Heart right ventricle (tissue), 16 donors: ENCODE measurements at regions of chr10 and their contacts with region 1.

Region 1: DNA sequence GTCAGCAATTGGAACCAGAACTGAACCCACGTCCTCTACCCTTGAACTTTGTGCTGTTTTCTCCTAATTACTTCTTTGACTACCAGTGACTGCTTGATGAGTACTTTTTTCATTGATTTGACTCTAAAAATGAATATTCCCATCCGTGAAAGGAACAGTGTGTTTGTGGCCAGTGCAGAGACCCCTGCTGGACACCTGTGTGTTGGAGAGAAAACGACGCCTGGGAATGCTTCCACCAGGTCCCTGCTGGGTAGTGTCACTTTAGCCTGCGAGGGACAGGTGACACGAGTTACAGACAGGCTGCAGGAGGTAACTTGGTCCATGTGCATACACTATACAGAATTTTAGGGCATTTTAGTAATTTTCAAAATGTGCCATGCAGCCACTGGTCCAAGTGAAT is 6.8 kb upstream of the GJD4 start:
- DNase-seq: no peak
- ATAC-seq: peak in 1 of 8 donors; percentile 39
- H3K4me3 ChIP-seq: no peak overlapping the region
- H3K27ac ChIP-seq: no peak overlapping the region
- H3K4me1 ChIP-seq: no peaks in the 10 kb centered on the region
- H3K27me3 ChIP-seq: peaks cover 0 to 21% (median 7%) of the 10 kb centered on the region in 7 donors
- CTCF ChIP-seq: peak; percentile 8 to 65 (median 47)

Region 2: DNA sequence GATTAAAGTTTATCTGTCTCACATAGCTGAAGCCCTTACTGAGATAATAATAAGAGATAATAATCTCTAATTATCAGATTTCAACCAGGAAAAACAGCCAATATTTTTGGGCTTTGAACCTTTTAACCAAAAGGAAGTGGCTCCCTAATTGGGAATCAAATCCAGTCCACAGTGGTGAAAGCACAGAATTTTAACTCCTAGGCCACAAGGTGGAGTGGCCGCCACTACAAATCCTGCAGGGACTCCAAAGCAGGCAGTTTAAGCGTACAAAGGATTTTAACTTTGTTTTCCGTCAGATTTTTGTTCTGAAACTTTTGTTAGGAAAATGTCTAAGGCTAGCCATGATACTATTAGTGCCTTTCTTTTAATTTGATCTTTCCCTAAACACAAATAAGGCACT is 361.6 kb before region 1 on chr10:
- intact Hi-C with region 1: loop called in 8 of 10 experiments (anchors 2 to 10 kb)
- DNase-seq: no peak
- ATAC-seq: no peak
- H3K4me3 ChIP-seq: no peak overlapping the region
- H3K27ac ChIP-seq: no peak overlapping the region
- H3K4me1 ChIP-seq: peaks cover 0 to 5% (median 0%) of the 10 kb centered on the region in 9 donors
- H3K27me3 ChIP-seq: no peaks in the 10 kb centered on the region
- CTCF ChIP-seq: peak in 8 of 9 donors; percentile 16 to 58 (median 36)

Region 3: GRCh38 chr10:35246770-35247343 is 351.5 kb before region 1 on chr10:
- intact Hi-C with region 1: loop called in 5 of 10 experiments (anchors 5 to 10 kb)
- DNase-seq: no peak
- ATAC-seq: no peak
- H3K4me3 ChIP-seq: no peak overlapping the region
- H3K27ac ChIP-seq: no peak overlapping the region
- H3K4me1 ChIP-seq: no peaks in the 10 kb centered on the region
- H3K27me3 ChIP-seq: no peaks in the 10 kb centered on the region
- CTCF ChIP-seq: no peak

Region 4: GRCh38 chr10:35412900-35413491 is 185.4 kb before region 1 on chr10:
- intact Hi-C with region 1: no loop called
- DNase-seq: no peak
- ATAC-seq: no peak
- H3K4me3 ChIP-seq: no peak overlapping the region
- H3K27ac ChIP-seq: peak overlapping the region in 2 of 10 donors; percentile 47 to 74
- H3K4me1 ChIP-seq: peaks cover 25 to 98% (median 76%) of the 10 kb centered on the region in 9 donors
- H3K27me3 ChIP-seq: no peaks in the 10 kb centered on the region
- CTCF ChIP-seq: no peak

Region 5: DNA sequence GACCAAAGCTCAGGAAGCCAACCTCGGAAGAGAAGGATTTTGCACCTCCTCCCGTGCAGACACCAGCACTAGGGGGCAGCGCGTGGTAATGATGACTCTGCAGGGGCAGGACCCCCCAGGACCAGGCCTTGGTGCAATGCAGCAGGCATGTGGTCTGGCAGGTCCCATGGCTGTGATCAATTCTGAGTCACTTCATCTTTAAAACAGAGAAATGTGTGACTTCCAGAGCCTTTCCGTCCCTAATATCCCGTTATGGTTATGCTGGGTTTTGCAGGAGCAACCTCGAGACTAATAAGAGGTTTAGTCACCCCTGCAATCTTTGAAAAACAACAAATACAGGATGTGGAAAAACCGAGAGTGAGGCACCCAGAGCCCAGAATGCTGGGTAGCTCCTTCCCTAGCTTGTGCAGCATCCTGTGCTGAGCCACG is 23.4 kb before region 1 on chr10:
- intact Hi-C with region 1: no loop called
- DNase-seq: no peak
- ATAC-seq: no peak
- H3K4me3 ChIP-seq: no peak overlapping the region
- H3K27ac ChIP-seq: no peak overlapping the region
- H3K4me1 ChIP-seq: peaks cover 0 to 17% (median 11%) of the 10 kb centered on the region in 9 donors
- H3K27me3 ChIP-seq: no peaks in the 10 kb centered on the region
- CTCF ChIP-seq: peak in 1 of 9 donors; percentile 16